Prostate gland (tissue), 2 donors: ENCODE measurements at regions of chr16 and their contacts with region 1.

Region 1: GRCh38 chr16:67254801-67255552 is 6.2 kb downstream of the SLC9A5 start:
- DNase-seq: no peak
- H3K4me3 ChIP-seq: no peak overlapping the region
- H3K27ac ChIP-seq: no peak overlapping the region
- H3K4me1 ChIP-seq: no peaks in the 10 kb centered on the region
- H3K27me3 ChIP-seq: no peaks in the 10 kb centered on the region
- CTCF ChIP-seq: no peak
- POLR2A ChIP-seq: no peak

Region 2: DNA sequence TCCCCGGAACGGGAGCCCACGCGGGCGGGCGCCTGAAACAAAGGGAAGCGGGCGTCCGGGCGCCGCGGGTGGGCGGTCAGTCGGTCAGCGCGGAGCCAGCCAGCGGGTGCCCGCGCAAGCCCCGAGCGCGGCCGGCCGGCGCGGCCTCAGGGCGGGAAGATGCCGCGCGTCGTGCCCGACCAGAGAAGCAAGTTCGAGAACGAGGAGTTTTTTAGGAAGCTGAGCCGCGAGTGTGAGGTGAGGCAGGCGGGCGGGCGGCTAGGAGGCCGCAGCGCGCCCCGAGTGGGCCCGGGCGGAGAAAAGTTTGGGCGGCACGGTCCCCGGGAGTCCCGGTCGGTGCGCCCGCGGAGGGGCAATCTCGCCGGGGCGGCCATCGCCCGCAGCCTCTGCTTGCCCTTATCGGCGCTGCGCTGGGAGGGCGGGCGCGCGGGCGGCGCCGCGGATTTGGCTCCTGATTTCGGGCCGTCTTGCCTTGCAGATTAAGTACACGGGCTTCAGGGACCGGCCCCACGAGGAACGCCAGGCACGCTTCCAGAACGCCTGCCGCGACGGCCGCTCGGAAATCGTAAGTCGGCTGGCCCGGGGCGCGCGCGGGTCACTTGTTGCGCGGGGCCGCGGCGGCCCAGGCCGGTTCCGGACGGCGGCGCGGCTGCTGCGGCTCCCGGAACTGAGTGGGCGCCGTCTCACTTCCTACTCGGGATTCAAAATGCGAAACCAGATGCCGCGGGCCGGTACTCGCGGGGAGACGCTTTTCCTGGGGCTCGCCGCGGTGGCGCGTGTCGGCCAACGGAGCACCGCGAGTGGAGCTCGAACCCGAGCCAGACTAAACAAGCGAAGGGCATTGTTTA is 225.5 kb before region 1 on chr16:
- intact Hi-C with region 1: no loop called
- DNase-seq: peak; percentile 57
- H3K4me3 ChIP-seq: peak overlapping the region; percentile 73 to 95
- H3K27ac ChIP-seq: peak overlapping the region; percentile 93 to 96
- H3K4me1 ChIP-seq: no peaks in the 10 kb centered on the region
- H3K27me3 ChIP-seq: no peaks in the 10 kb centered on the region
- CTCF ChIP-seq: peak in 1 of 4 experiments; percentile 2
- POLR2A ChIP-seq: peak; percentile 73

Region 3: DNA sequence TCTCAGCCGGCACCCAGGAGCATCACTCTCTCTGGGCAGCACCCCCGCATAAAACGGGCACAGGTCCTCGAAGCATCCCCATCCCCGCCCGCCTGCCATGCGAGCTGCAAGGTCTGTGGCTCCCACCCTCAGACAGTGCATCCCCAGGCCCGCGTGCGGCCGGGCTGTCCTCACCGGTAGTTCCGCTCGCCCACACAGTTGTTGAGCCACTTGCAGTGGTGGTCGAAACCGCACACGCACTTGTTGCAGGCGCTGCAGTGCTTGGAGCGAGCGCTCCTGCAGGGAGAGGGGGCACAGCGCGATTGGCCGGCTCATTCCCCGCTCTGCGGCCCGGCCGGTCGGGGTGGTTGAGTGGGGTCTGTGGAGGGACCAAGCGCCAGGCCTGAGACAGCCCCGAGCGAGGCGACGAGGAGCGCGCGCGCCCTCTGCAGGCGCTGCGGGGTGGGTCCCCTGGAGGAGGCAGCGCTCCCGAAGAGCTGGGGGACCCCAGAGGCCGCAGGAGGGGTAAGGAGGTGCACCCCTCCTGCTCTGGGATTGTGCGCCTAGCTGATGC is 144.3 kb after region 1 on chr16:
- intact Hi-C with region 1: loop called (anchors 5 kb)
- DNase-seq: no peak
- H3K4me3 ChIP-seq: no peak overlapping the region
- H3K27ac ChIP-seq: no peak overlapping the region
- H3K4me1 ChIP-seq: peaks cover 16% of the 10 kb centered on the region
- H3K27me3 ChIP-seq: no peaks in the 10 kb centered on the region
- CTCF ChIP-seq: peak; percentile 65 to 85 (median 76)
- POLR2A ChIP-seq: no peak